ENCODE measurements at regions of chr11 and their contacts with region 1.

Region 1: DNA sequence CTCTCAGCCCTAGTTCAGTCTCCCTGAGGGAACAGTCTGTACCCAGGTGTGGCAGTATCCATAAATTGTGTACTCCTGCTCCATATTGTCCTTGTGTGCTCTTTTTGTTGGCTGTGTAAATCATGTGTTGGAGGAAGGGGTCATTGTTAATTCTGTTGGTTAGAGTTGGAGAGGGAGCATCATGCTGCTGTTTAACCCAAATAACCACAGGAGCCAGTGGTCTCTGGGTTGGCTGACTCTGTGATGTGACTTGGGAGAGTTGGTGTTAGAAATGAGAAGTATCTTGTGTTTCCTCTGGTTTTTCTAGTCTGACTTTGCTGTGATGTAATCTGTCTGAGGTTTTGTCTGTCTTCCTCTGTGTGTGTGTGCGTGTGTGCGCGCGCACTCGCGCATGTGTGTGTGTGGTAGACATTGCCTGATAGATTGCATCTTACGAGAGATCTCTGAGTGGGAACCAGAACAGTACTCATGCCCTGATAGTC is 30.5 kb downstream of the CTNND1 start:
- DNase-seq: no peak
- H3K4me3 ChIP-seq: no peak overlapping the region
- H3K27ac ChIP-seq: no peak overlapping the region
- H3K4me1 ChIP-seq: peaks cover 5% of the 10 kb centered on the region
- H3K27me3 ChIP-seq: no peaks in the 10 kb centered on the region
- CTCF ChIP-seq: no peak
- EP300 ChIP-seq: no peak
- POLR2A ChIP-seq: no peak

Region 2: GRCh38 chr11:57741132-57742086 is 50.7 kb before region 1 on chr11 and contains the start of gene SELENOH:
- intact Hi-C with region 1: loop called in 1 of 4 experiments (anchors 10 kb)
- DNase-seq: peak; percentile 93 to 96 (median 94)
- H3K4me3 ChIP-seq: peak within 1 kb of the TSS; percentile 81
- H3K27ac ChIP-seq: peak within 1 kb of the TSS; percentile 23 to 83
- H3K4me1 ChIP-seq: no peaks in the 10 kb centered on the region
- H3K27me3 ChIP-seq: no peaks in the 10 kb centered on the region
- CTCF ChIP-seq: no peak
- EP300 ChIP-seq: no peak
- POLR2A ChIP-seq: peak; percentile 72
- total RNA-seq, gene SELENOH: 88.1 to 244 (median 107) TPM

Measured in ovary (tissue), 10 donors.